HEK293T (cell line): ENCODE measurements at regions of chr7 and their contacts with region 1.

Region 1: DNA sequence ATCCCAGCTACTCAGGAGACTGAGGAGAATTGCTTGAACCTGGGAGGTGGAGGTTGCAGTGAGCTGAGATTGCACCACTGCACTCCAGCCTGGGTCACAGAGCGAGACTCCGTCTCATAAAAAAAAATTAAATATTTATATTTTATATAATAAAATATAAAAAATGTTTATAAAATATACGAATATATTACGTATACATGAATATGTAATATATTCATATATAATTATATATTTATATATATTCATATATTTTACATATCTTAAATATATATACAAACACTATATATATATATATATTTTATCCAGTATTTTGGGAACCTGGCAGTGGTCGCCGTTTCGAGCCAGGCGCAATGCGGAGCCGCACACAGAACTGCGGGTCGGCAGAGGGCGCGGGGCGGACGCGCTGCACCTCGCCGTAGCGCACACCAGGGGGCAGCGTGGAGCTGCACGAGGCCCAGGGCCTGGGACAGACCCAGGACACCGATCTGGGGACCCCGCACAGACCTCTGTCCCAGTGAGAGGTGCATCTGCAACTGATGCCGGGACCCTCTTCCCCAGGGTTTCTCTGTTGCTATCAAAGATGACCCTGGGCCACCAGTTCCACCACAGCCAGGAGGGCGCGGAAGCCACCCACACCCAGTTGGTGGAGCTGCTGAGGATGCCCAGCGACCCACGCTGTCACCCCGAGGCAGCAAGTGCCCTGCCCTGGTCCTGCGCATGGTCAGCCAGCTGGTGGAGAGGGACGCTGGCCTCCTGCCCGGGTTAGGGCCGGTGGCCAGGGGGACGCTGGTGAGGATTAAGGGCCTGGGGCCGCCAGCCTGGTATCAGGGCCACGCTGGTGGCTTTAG is 22.7 kb downstream of the AP5Z1 start:
- DNase-seq: peak; percentile 89

Region 2: GRCh38 chr7:4665661-4666060 is 132.4 kb before region 1 on chr7:
- CTCF ChIA-PET with region 1: no interaction called
- POLR2A ChIA-PET with region 1: no interaction called
- DNase-seq: no peak

Region 3: DNA sequence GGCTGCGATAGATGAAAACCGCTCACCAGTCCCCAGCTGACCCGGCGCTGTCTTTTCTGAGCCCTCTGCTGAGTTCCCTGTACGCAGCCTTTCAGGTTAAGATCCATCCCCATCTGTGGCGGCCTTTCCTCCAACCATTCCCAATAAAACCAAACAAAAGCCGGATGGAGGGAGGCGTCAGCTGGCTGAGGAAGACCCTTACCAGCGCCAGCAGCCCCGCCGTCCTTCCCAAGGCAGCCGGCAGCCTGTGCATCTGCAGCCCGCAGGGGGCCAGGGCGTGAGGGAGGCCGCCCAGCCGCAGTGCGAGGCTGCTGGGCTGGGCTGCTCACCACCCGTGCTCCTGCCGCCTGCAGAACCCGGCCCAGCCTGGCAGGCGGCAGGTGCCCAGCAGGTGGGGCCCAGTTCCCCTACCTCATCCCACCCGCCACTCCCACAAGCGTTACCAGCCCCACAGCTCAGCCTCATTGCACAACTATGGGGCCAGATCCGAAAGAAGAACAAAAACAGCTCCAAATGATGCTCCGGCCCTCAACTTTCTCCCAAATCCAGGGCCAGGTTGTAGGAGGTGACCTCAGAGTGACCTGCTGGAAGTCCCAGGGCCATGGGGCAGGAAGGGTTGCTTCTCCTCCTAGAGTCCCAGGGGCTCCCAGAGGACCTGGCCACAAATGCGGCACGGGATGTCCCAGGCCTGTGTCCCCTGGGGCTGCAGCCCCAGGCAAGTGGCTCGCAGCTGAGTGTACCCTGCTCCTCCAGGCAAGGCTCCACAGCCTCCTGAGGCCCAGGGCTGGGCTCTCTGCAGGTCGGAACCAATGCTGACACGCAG is 39.9 kb after region 1 on chr7:
- CTCF ChIA-PET with region 1: no interaction called
- POLR2A ChIA-PET with region 1: no interaction called
- DNase-seq: peak; percentile 50

Region 4: GRCh38 chr7:5083311-5083711 is 285.2 kb after region 1 on chr7:
- CTCF ChIA-PET with region 1: interaction called, 13 read pairs
- POLR2A ChIA-PET with region 1: no interaction called
- DNase-seq: no peak